ENCODE measurements at regions of chr19 and their contacts with region 1.

Region 1: GRCh38 chr19:10769533-10770491 is 51.9 kb downstream of the DNM2 start:
- DNase-seq: no peak

Region 2: DNA sequence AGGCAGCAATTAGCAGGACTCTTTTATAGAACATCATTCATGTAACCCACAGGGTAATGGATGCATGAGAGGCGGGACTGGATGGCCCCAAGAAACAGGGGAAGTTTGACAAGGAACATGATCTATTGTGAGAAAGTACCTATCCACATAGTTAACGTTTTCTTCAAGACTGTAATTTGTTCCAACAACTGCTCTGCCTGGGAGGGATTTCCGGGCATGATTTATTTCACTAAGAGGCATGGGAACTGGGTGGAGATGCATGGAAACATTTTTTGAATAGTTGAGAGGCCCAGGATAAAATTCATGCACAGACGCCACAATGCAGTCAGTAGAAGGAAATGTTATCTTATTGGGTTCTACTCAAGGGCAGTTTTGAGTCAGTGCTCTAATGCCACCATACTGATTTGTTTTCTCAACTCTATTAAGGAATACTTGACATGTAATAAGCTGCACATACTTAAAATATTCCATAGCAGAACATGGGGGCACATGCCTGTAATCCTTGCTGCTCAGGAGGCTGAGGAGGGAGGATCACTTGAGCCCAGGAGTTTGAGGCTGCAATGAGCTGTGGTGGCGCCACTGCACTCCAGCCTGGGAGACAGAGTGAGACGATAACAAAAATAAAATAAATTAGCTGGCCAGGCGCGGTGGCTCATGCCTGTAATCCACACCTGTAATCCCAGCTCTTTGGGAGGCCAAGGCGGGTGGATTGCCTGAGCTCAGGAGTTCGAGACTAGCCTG is 236.0 kb before region 1 on chr19:
- intact Hi-C with region 1: no loop called
- DNase-seq: no peak

Region 3: GRCh38 chr19:10662384-10663251 is 107.2 kb before region 1 on chr19:
- intact Hi-C with region 1: no loop called
- DNase-seq: no peak

Region 4: DNA sequence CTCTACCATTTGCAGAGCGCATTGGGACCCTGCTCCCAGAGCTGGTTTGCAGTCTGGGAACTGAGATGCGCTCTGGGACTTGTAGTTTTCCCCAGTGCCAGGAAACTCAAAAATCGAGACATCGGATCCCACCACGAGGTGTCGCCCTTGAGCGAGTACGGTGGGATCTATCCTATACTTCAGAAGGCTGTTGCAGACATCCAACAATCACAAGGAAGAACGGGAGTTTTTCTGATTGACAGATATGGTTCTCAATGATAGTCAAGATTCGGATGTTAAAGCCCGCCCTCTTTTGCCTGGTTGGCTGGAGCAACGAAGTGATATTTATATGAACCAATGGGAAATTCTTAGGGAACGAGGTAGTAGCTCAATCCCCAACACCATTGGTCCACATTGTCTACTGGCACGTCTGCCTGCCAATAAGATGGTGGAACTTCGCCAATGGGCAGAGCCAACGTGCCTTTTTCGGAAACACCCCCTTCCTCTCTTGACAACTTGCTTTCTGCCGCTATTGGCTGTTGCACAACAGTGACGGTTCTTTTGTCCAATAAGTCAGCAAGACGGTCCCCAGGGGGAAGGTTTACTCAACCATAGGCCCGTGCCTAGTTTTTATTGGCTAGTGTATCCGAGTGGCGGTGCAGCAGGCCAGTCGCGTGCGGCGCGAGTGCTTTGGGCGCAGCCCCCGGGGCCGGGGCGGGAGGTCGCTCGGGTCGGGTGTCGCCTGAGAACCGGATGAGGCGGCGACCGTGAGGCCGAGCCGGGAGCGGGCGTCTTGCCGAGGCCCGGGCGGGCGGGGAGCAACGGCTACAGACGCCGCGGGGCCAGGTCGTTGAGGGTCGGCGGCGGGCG is 52.2 kb before region 1 on chr19 and contains the start of gene DNM2:
- intact Hi-C with region 1: loop called (anchors 2 kb)
- DNase-seq: peak; percentile 99
- total RNA-seq, gene DNM2: 138 TPM

Region 5: DNA sequence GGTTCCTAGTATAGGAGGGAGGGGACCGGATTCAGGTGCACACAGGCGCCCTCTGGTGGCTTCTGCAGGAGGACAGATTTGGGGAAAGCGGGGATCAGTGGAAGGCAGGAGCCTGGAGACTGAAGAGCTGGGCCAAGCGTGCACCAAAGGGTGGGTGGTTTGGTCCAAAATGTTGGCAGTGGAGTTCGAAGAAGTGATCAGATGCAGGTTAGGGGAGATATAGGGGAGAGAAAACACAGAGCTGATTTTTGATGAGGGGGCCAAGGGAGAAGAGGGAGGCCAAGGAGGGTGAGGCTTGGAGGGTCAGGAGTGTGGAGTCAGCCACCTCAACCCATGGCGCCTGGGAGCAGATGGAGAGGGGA is 94.7 kb after region 1 on chr19:
- intact Hi-C with region 1: loop called (anchors 5 kb)
- DNase-seq: peak; percentile 92